GM10248 (cell line): ENCODE measurements at regions of chr3 and their contacts with region 1.

Region 1: GRCh38 chr3:47890828-47891612 is 88.1 kb downstream of the DHX30 start:
- DNase-seq: no peak
- CTCF ChIP-seq: no peak

Region 2: DNA sequence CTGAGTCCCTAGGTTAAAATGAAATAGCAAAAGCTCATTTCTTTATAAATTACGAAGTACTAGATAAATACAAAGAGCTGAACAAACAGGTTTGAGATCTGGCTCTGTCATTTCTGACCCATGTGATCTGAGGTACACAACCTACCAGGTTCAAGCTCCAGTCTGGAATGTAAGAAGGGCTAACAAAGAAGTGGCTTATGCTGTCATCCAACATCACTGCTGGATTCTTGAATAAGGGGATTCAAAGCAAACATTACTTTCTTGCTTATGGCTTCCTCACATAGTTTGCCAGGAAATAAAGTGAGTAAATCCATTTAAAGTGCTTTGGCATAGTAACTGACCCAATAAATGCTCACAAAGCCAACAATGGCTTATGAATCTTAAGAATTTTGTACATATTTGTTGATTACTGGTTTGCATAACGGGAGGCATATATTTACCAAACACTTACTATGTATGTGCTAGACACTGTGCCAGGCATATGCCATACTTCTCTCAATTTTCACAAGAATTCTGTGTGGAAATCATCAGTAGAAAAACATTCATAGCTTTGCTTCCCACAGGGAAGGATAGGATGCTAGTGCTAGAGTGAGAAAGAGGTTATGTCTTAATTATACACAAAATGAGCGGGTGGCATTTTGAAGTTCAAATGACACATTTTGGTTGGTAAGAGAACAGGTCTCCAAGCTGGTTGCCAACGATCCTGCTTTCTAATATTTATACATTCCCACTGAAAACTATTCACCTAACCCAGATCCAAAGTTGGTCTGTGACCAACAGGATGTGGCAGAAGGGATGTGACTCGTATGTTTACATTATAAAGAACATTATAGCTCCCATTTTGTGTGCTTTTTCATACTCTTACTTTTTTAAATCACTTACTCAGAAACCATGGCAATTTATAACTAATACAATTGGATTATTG is 273.7 kb before region 1 on chr3:
- CTCF ChIA-PET with region 1: no interaction called
- POLR2A ChIA-PET with region 1: no interaction called
- DNase-seq: no peak
- CTCF ChIP-seq: no peak

Region 3: DNA sequence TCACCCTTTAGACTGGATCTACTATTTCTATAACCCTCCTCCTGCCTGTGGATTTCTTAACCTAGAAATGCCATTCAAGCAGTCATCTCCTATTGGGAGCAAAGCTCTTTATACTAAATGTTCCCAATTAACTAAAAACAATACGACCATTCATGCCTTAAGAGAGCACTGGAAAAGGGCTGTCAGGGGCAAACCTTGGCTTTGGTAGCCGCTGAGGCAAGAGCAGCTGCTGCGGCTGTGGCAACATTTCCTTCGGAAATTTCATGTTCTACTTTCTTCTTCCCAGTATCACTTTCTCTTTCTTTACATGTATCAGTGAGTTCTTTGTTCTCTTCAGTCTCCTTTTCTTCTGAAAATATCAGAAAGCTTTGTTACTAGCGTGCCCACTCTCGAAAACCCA is 256.0 kb before region 1 on chr3:
- CTCF ChIA-PET with region 1: no interaction called
- POLR2A ChIA-PET with region 1: no interaction called
- DNase-seq: no peak
- CTCF ChIP-seq: no peak

Region 4: DNA sequence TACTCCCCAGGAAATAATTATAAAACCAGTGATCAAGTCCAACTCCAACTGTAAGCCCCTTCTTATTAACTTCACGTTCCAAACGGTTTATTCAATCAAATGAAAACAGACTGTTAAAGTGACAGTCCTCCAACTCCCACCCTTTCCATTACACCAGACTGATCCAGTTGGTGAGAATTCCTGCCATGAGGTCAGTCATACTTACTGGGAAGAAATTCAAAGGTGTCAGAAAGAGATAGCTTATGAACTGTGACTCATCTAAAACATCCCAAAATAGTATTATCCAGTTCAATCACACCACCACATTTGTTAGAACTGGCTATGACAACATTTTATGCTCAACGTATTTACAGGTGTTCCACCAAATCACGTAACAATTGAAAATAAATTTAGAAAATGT is 128.8 kb before region 1 on chr3:
- CTCF ChIA-PET with region 1: no interaction called
- POLR2A ChIA-PET with region 1: interaction called, 10 read pairs
- DNase-seq: no peak
- CTCF ChIP-seq: no peak

Region 5: GRCh38 chr3:47916696-47917095 is 25.7 kb after region 1 on chr3:
- CTCF ChIA-PET with region 1: no interaction called
- POLR2A ChIA-PET with region 1: no interaction called
- DNase-seq: no peak
- CTCF ChIP-seq: no peak